Natural killer cell (primary cell): ENCODE measurements at regions of chr1 and their contacts with region 1.

Region 1: GRCh38 chr1:154558575-154559465 is at the start of gene UBE2Q1:
- DNase-seq: peak; percentile 99 to 100
- ATAC-seq: peak; percentile 86 to 94 (median 90)
- H3K4me3 ChIP-seq: peak within 1 kb of the TSS; percentile 78
- H3K4me3 Mint-ChIP-seq: peak within 1 kb of the TSS; percentile 92
- H3K27ac ChIP-seq: peak within 1 kb of the TSS; percentile 84
- H3K27ac Mint-ChIP-seq: peak within 1 kb of the TSS; percentile 83 to 97
- H3K4me1 ChIP-seq: peaks cover 28% of the 10 kb centered on the region
- H3K4me1 Mint-ChIP-seq: peaks cover 38 to 48% of the 10 kb centered on the region in 2 donors
- H3K27me3 ChIP-seq: no peaks in the 10 kb centered on the region
- H3K27me3 Mint-ChIP-seq: no peaks in the 10 kb centered on the region
- CTCF ChIP-seq: no peak
- total RNA-seq, gene UBE2Q1: 100 to 137 (median 112) TPM

Region 2: DNA sequence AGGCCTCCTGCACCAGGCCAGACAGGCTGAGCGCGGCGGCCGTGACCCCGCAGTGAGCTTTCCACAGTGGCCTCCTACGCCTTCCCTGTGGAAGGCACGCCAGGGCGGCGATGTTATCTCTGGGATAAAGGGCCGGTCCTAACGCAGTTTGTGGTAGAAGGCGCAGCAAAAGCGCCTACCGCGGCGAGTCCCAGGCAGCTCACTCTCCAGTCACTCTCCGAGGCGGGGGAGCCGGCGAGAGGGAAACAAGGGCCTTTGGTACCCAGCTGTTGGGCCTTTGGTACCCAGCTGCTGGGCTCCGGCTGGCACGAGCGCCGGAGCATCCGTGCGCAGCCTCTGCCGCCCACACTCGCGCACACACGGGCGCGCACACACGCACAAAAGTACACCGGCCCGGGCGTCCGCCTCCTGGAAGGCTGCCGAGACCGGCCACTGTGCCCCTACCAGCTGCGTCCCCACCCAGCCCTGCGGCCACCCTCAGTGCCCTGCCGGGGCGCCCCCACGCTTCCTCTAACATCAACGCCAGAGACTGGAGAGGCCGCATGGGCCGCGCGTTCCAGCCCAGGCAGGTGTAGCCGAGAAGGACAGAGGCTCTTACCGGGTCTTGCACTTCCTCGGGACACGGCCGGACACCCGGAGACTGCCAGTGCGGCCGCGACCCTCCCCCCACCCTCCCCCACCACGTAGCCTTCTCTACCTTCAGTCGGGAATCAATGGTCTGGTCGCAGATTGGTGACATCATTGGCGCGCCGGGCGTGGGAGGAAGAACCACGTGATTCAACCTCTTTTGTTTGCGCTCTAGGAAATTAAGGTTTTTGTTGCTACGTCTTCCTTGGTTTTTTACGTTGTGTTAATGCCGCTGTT is 68.7 kb after region 1 on chr1:
- intact Hi-C with region 1: loop called (anchors 5 kb)
- DNase-seq: peak; percentile 89 to 94
- ATAC-seq: peak; percentile 72 to 82 (median 77)
- H3K4me3 ChIP-seq: peak overlapping the region; percentile 97
- H3K4me3 Mint-ChIP-seq: peak overlapping the region; percentile 95
- H3K27ac ChIP-seq: peak overlapping the region; percentile 99
- H3K27ac Mint-ChIP-seq: peak overlapping the region; percentile 89 to 94
- H3K4me1 ChIP-seq: peaks cover 11% of the 10 kb centered on the region
- H3K4me1 Mint-ChIP-seq: peaks cover 15 to 31% of the 10 kb centered on the region in 2 donors
- H3K27me3 ChIP-seq: no peaks in the 10 kb centered on the region
- H3K27me3 Mint-ChIP-seq: peaks cover 10 to 13% of the 10 kb centered on the region in 2 donors
- CTCF ChIP-seq: no peak

Region 3: GRCh38 chr1:154878371-154879022 is 319.7 kb after region 1 on chr1:
- intact Hi-C with region 1: loop called (anchors 1 kb)
- DNase-seq: peak; percentile 65 to 82
- ATAC-seq: peak; percentile 80 to 96 (median 96)
- H3K4me3 ChIP-seq: no peak overlapping the region
- H3K4me3 Mint-ChIP-seq: no peak overlapping the region
- H3K27ac ChIP-seq: no peak overlapping the region
- H3K27ac Mint-ChIP-seq: no peak overlapping the region
- H3K4me1 ChIP-seq: no peaks in the 10 kb centered on the region
- H3K4me1 Mint-ChIP-seq: no peaks in the 10 kb centered on the region
- H3K27me3 ChIP-seq: no peaks in the 10 kb centered on the region
- H3K27me3 Mint-ChIP-seq: peaks cover 3 to 18% of the 10 kb centered on the region in 2 donors
- CTCF ChIP-seq: peak; percentile 80

Region 4: GRCh38 chr1:154888757-154889156 is 329.9 kb after region 1 on chr1:
- intact Hi-C with region 1: no loop called
- DNase-seq: no peak
- ATAC-seq: no peak
- H3K4me3 ChIP-seq: no peak overlapping the region
- H3K4me3 Mint-ChIP-seq: no peak overlapping the region
- H3K27ac ChIP-seq: no peak overlapping the region
- H3K27ac Mint-ChIP-seq: no peak overlapping the region
- H3K4me1 ChIP-seq: no peaks in the 10 kb centered on the region
- H3K4me1 Mint-ChIP-seq: no peaks in the 10 kb centered on the region
- H3K27me3 ChIP-seq: no peaks in the 10 kb centered on the region
- H3K27me3 Mint-ChIP-seq: peaks cover 0 to 8% of the 10 kb centered on the region in 2 donors
- CTCF ChIP-seq: no peak

Region 5: GRCh38 chr1:154974063-154974807 is 415.4 kb after region 1 on chr1 and contains the start of gene CKS1B:
- intact Hi-C with region 1: loop called (anchors 1 kb)
- DNase-seq: peak; percentile 96 to 99
- ATAC-seq: peak; percentile 78 to 94 (median 85)
- H3K4me3 ChIP-seq: peak within 1 kb of the TSS; percentile 91
- H3K4me3 Mint-ChIP-seq: no peak within 1 kb of the TSS
- H3K27ac ChIP-seq: peak within 1 kb of the TSS; percentile 99
- H3K27ac Mint-ChIP-seq: no peak within 1 kb of the TSS
- H3K4me1 ChIP-seq: peaks cover 43% of the 10 kb centered on the region
- H3K4me1 Mint-ChIP-seq: peaks cover 15 to 26% of the 10 kb centered on the region in 2 donors
- H3K27me3 ChIP-seq: no peaks in the 10 kb centered on the region
- H3K27me3 Mint-ChIP-seq: no peaks in the 10 kb centered on the region
- CTCF ChIP-seq: no peak
- total RNA-seq, gene CKS1B: 8.5 to 13.0 (median 12.9) TPM

Region 6: DNA sequence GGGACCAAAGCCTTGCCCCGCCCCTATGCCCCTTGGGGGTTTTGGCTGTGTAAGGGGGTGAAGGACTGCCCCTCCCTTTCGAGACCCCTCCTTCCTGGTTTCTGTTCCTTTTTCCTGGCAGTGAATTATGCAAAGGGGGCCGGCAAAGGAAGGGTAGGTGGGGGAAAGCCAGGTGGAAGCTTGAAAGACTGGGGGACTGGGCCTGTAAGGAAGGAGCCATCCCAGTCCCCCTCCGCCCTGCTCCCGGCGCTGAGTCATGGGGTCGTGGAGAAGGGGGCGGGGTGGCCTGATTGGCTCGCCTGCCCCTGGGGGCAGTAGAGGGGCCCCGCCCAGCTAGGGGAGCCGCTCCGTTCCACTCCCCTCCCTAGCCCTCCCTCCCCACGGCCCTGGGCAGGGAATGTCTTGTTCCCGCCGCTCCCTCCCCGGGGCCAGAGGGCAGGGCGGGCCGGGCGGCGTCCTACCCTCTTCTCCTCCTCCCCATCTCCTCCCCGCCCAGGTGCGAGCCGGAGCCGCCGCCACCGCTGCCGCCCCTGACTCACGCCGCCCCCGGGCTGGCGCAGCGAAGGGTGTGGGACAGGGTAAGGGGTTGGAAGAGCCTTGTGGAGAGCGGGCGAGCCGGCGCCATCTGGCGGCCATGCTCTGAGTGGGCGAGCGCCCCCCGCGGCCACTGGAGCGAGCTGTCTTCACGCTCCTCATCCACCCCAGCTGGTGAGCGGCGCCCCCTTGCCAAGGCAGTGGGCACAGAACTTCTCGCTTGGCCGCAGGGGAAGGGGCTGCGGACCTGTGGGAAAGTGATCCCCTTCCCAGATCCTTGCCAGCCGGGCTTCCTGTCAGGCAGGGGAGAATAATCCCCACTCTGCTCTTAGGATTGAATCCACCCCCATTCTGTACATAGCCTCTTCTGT is 458.5 kb after region 1 on chr1:
- intact Hi-C with region 1: loop called (anchors 2 kb)
- DNase-seq: peak; percentile 88 to 94
- ATAC-seq: peak; percentile 99
- H3K4me3 ChIP-seq: peak overlapping the region; percentile 13
- H3K4me3 Mint-ChIP-seq: peak overlapping the region; percentile 52
- H3K27ac ChIP-seq: peak overlapping the region; percentile 68
- H3K27ac Mint-ChIP-seq: peak overlapping the region; percentile 27 to 50
- H3K4me1 ChIP-seq: peaks cover 58% of the 10 kb centered on the region
- H3K4me1 Mint-ChIP-seq: peaks cover 17 to 46% of the 10 kb centered on the region in 2 donors
- H3K27me3 ChIP-seq: no peaks in the 10 kb centered on the region
- H3K27me3 Mint-ChIP-seq: no peaks in the 10 kb centered on the region
- CTCF ChIP-seq: peak; percentile 100

Region 7: GRCh38 chr1:155084722-155085503 is 526.1 kb after region 1 on chr1:
- intact Hi-C with region 1: loop called (anchors 1 kb)
- DNase-seq: peak; percentile 92 to 95
- ATAC-seq: peak; percentile 75 to 91 (median 80)
- H3K4me3 ChIP-seq: peak overlapping the region; percentile 61
- H3K4me3 Mint-ChIP-seq: peak overlapping the region; percentile 94
- H3K27ac ChIP-seq: peak overlapping the region; percentile 88
- H3K27ac Mint-ChIP-seq: peak overlapping the region; percentile 87 to 96
- H3K4me1 ChIP-seq: peaks cover 53% of the 10 kb centered on the region
- H3K4me1 Mint-ChIP-seq: peaks cover 30 to 51% of the 10 kb centered on the region in 2 donors
- H3K27me3 ChIP-seq: peaks cover 43% of the 10 kb centered on the region
- H3K27me3 Mint-ChIP-seq: peaks cover 16 to 24% of the 10 kb centered on the region in 2 donors
- CTCF ChIP-seq: peak; percentile 89